Heart left ventricle (tissue), 16 donors: ENCODE measurements at regions of chr9 and their contacts with region 1.

Region 1: DNA sequence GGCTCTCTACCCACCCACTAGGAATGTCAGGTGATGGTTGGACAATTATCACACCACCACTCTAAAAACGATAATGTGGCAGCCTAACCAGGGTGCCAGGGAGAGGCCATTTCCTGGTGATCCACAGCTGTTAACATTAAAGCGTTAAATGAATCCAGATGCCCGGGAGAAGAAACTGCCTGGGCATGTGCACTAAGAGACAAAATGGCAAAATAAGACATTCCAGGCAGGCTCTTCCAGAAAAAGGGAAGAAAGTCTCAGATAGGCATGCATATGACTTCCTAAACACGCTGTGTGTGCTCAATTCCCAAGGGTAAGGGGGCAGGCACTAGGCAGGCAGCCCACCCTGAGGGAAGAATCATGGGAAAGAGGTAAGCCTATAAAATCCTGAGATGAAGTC is 4.6 kb upstream of the TXN start:
- DNase-seq: no peak
- ATAC-seq: no peak
- H3K4me3 ChIP-seq: no peak overlapping the region
- H3K27ac ChIP-seq: no peak overlapping the region
- H3K4me1 ChIP-seq: peaks cover 0 to 20% (median 7%) of the 10 kb centered on the region in 12 donors
- H3K27me3 ChIP-seq: no peaks in the 10 kb centered on the region
- CTCF ChIP-seq: no peak
- POLR2A ChIP-seq: no peak

Region 2: DNA sequence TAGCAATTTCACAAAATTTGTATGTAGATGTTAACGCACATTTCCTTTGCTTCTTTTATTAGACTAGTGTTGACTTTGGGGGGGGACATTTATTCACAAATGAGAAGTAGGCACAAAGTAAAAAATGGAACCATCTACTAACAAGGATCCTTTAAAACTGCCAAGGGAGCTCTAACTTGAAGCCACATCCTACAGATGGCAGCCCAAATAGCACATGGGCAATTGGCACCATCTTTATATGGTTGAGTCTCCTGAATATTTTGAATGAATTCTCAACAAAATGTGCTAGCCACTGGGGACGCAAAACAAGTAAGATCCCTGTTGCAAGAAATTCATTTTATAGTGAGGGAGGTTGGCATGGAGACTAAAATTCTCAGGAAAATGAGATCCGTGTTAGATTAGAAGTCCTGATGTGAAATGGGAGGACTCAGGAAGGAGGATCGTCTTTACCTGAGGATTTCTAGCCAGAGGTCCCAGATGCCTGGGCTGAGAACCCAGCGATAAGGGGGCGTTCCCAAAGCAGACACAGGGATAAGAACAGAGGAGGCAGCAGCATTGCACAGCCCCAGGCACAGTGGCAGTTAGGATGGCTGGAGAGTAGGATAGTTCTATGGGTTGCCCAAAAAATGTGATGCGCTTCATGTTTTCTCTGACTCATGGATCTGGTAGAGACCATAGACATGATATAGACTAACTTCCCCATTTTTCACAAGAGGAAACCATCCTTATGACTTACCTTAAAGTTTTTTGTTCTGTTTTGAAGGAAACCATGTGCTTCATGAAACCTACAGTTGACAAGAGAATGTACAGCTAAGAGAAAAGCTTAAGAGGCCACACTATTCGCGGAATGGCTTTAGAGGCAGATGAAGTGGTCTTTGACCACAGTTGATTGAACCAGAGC is 90.3 kb before region 1 on chr9:
- intact Hi-C with region 1: no loop called
- DNase-seq: no peak
- ATAC-seq: no peak
- H3K4me3 ChIP-seq: no peak overlapping the region
- H3K27ac ChIP-seq: no peak overlapping the region
- H3K4me1 ChIP-seq: peaks cover 0 to 38% (median 18%) of the 10 kb centered on the region in 12 donors
- H3K27me3 ChIP-seq: no peaks in the 10 kb centered on the region
- CTCF ChIP-seq: no peak
- POLR2A ChIP-seq: no peak

Region 3: DNA sequence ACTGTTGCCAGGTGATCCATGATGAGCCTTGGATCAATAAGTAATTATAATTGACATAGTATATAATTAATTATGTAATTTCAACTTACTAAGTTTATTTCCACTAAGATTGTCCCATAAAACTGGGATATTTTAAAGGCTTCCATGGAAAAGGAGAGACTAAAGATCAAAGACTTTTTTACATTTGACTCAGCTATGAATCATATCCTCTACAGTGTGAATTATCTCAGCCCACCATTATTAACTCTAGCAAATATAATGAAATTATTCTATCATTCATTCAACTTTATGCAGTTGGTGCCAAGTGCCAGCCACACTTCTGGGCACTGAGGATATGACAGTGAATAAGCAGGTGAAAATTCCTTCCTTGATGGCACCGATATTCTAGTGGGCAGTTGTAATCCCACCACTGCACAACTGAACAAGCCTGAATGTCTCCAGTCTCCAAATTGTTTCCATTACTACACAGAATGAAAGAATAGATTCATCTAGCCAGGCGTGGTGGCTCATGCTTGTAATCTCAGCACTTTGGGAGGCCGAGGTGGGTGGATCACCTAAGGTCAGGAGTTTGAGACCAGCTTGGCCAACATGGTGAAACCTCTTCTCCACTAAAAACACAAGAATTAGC is 17.3 kb after region 1 on chr9:
- intact Hi-C with region 1: loop called in 1 of 10 experiments (anchors 2 kb)
- DNase-seq: no peak
- ATAC-seq: no peak
- H3K4me3 ChIP-seq: no peak overlapping the region
- H3K27ac ChIP-seq: no peak overlapping the region
- H3K4me1 ChIP-seq: peaks cover 0 to 5% (median 0%) of the 10 kb centered on the region in 12 donors
- H3K27me3 ChIP-seq: peaks cover 0 to under 1% (median 0%) of the 10 kb centered on the region in 9 donors
- CTCF ChIP-seq: no peak
- POLR2A ChIP-seq: no peak